ENCODE measurements at regions of chr6 and their contacts with region 1.

Region 1: GRCh38 chr6:164927288-164928056 is 381.9 kb downstream of the C6orf118 start:
- DNase-seq: peak; percentile 53
- H3K4me3 ChIP-seq: no peak overlapping the region
- H3K27ac ChIP-seq: no peak overlapping the region
- H3K4me1 ChIP-seq: no peaks in the 10 kb centered on the region
- H3K27me3 ChIP-seq: no peaks in the 10 kb centered on the region
- CTCF ChIP-seq: peak; percentile 87 to 95
- POLR2A ChIP-seq: no peak

Region 2: DNA sequence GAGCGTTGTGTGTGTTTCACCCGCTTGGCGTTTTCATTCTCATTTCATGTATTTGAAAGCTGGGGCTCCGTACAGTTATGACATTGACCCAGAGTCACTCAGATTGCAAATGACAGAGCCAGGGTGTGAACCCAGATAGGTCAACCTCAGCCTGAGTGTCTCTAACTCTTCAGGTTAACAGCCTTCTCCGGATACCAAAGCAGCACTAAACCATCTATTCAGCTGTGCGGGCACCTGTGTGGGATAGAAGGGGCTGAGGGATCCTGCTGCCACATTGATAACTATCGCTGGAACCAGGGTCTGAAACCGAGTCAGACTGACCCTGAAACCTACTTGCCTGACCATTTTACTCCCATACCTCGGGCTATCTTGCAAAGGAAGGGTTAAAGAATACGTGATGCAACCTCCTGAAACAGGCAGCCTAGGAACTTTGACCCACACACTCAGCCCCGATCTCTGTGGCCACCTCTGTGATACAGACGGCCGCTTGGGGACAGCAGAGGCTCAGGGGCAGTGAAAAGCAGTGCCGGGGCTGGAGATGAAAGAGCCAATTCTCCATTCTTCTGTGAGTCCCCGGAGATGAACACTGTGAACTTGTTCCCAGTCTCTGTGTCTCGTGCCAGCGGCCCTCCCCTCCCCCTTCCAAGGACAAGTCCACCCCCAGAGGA is 1746.5 kb before region 1 on chr6:
- CTCF ChIA-PET with region 1: no interaction called
- POLR2A ChIA-PET with region 1: no interaction called
- dilution Hi-C with region 1: no loop called
- intact Hi-C with region 1: loop called (anchors 1 kb)
- DNase-seq: peak; percentile 71
- H3K4me3 ChIP-seq: no peak overlapping the region
- H3K27ac ChIP-seq: no peak overlapping the region
- H3K4me1 ChIP-seq: no peaks in the 10 kb centered on the region
- H3K27me3 ChIP-seq: peaks cover 4 to 9% of the 10 kb centered on the region in 2 experiments
- CTCF ChIP-seq: peak; percentile 93 to 97
- POLR2A ChIP-seq: no peak

Region 3: GRCh38 chr6:163585932-163586437 is 1341.5 kb before region 1 on chr6:
- CTCF ChIA-PET with region 1: no interaction called
- POLR2A ChIA-PET with region 1: no interaction called
- dilution Hi-C with region 1: no loop called
- intact Hi-C with region 1: loop called (anchors 10 kb)
- DNase-seq: peak; percentile 76
- H3K4me3 ChIP-seq: no peak overlapping the region
- H3K27ac ChIP-seq: peak overlapping the region; percentile 21
- H3K4me1 ChIP-seq: peaks cover 20% of the 10 kb centered on the region
- H3K27me3 ChIP-seq: no peaks in the 10 kb centered on the region
- CTCF ChIP-seq: no peak
- POLR2A ChIP-seq: no peak

Region 4: DNA sequence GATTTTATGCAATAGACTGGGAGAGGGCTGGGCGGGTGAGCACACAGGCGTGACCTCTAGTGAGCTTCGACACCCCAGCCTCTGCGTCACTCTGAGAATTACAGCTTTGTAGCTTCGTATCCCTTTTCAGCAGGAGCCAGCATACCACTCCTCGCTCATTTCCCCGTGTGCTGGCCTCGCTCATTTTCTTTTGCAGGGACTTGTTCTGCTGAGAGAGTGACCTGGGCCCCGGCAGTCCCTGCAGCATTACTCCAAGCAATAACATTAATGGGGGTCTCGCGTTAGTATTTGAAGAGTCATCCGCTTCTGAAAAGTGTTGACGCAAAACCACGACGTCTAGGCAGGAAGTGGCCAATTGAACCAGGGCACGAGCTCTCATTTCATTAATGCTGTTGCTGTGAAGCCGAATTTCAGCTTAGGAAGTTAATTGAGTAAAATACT is 1319.2 kb before region 1 on chr6:
- CTCF ChIA-PET with region 1: no interaction called
- POLR2A ChIA-PET with region 1: no interaction called
- dilution Hi-C with region 1: no loop called
- intact Hi-C with region 1: loop called (anchors 1 kb)
- DNase-seq: no peak
- H3K4me3 ChIP-seq: no peak overlapping the region
- H3K27ac ChIP-seq: no peak overlapping the region
- H3K4me1 ChIP-seq: no peaks in the 10 kb centered on the region
- H3K27me3 ChIP-seq: no peaks in the 10 kb centered on the region
- CTCF ChIP-seq: no peak
- POLR2A ChIP-seq: no peak

Region 5: GRCh38 chr6:164106345-164106769 is 821.1 kb before region 1 on chr6:
- CTCF ChIA-PET with region 1: interaction called, 14 read pairs
- POLR2A ChIA-PET with region 1: no interaction called
- dilution Hi-C with region 1: no loop called
- intact Hi-C with region 1: loop called (anchors 1 kb)
- DNase-seq: peak; percentile 31
- H3K4me3 ChIP-seq: no peak overlapping the region
- H3K27ac ChIP-seq: no peak overlapping the region
- H3K4me1 ChIP-seq: peaks cover 9% of the 10 kb centered on the region
- H3K27me3 ChIP-seq: no peaks in the 10 kb centered on the region
- CTCF ChIP-seq: peak; percentile 48 to 66
- POLR2A ChIP-seq: no peak

Region 6: GRCh38 chr6:164331026-164331425 is 596.4 kb before region 1 on chr6:
- CTCF ChIA-PET with region 1: no interaction called
- POLR2A ChIA-PET with region 1: no interaction called
- dilution Hi-C with region 1: no loop called
- intact Hi-C with region 1: loop called (anchors 5 kb)
- DNase-seq: peak; percentile 54
- H3K4me3 ChIP-seq: no peak overlapping the region
- H3K27ac ChIP-seq: no peak overlapping the region
- H3K4me1 ChIP-seq: peaks cover 12% of the 10 kb centered on the region
- H3K27me3 ChIP-seq: no peaks in the 10 kb centered on the region
- CTCF ChIP-seq: no peak
- POLR2A ChIP-seq: no peak

Region 7: DNA sequence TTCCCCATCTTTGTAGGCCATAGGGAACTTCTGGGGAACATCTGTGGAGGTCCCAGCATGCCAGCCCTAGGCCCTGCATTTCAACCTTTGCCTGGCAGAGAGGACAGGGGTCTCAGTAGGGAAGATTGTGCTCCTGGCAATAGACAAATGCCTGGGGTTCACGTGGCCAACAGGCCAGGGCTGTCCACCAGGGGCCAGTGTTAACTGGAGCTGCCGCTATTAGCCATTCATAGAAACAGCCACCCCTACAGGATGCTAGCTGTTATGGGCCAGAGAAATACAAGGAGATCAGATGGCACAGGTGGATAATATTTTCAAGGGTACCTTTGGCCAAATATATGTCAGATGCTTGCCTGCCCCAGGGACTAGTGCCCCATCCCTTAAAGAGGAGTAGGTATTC is 580.0 kb before region 1 on chr6:
- CTCF ChIA-PET with region 1: interaction called, 3 read pairs
- POLR2A ChIA-PET with region 1: no interaction called
- dilution Hi-C with region 1: no loop called
- intact Hi-C with region 1: loop called (anchors 1 kb)
- DNase-seq: no peak
- H3K4me3 ChIP-seq: no peak overlapping the region
- H3K27ac ChIP-seq: no peak overlapping the region
- H3K4me1 ChIP-seq: no peaks in the 10 kb centered on the region
- H3K27me3 ChIP-seq: no peaks in the 10 kb centered on the region
- CTCF ChIP-seq: peak; percentile 22 to 48
- POLR2A ChIP-seq: no peak

Measured in endothelial cell of umbilical vein (primary cell).